ENCODE measurements at regions of chr11 and their contacts with region 1.

Region 1: GRCh38 chr11:131674051-131674755 is 303.8 kb downstream of the NTM start:
- DNase-seq: no peak
- ATAC-seq: peak; percentile 95
- H3K4me3 ChIP-seq: no peak overlapping the region
- H3K27ac ChIP-seq: no peak overlapping the region
- H3K4me1 ChIP-seq: no peaks in the 10 kb centered on the region
- H3K27me3 ChIP-seq: no peaks in the 10 kb centered on the region
- CTCF ChIP-seq: peak; percentile 96 to 97 (median 97)
- EP300 ChIP-seq: no peak
- POLR2A ChIP-seq: no peak
- RAD21 ChIP-seq: peak; percentile 91

Region 2: GRCh38 chr11:130924770-130925169 is 749.4 kb before region 1 on chr11:
- CTCF ChIA-PET with region 1: interaction called, 4 read pairs
- POLR2A ChIA-PET with region 1: no interaction called
- RAD21 ChIA-PET with region 1: no interaction called
- SMC1A ChIA-PET with region 1: no interaction called
- in situ Hi-C with region 1: loop called (anchors 10 kb)
- intact Hi-C with region 1: loop called (anchors 2 kb)
- DNase-seq: no peak
- ATAC-seq: peak; percentile 39
- H3K4me3 ChIP-seq: no peak overlapping the region
- H3K27ac ChIP-seq: no peak overlapping the region
- H3K4me1 ChIP-seq: no peaks in the 10 kb centered on the region
- H3K27me3 ChIP-seq: no peaks in the 10 kb centered on the region
- CTCF ChIP-seq: no peak
- EP300 ChIP-seq: no peak
- POLR2A ChIP-seq: no peak
- RAD21 ChIP-seq: no peak

Region 3: DNA sequence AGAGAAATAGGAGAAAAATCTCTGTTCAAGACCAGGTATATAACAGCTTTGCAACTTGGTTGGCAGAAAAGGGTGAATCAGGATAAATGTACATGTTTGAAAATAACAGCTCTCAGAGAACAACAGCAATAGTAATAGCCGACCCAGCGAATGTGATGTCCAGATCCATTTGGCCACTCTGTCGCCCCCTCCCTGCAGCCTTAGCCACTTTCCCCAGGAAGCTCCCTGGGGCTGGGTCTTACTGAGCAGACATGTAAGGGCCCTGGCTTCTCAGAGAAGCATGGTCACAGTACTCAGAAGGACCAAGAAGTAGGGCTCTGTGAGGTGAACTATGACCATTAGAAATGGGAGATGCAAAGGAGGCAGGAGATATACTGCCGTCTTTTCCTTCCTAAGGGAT is 603.8 kb before region 1 on chr11:
- CTCF ChIA-PET with region 1: interaction called, 25 read pairs
- POLR2A ChIA-PET with region 1: no interaction called
- RAD21 ChIA-PET with region 1: interaction called, 19 read pairs
- SMC1A ChIA-PET with region 1: interaction called, 6 read pairs
- in situ Hi-C with region 1: loop called (anchors 5 kb)
- intact Hi-C with region 1: no loop called
- DNase-seq: no peak
- ATAC-seq: no peak
- H3K4me3 ChIP-seq: no peak overlapping the region
- H3K27ac ChIP-seq: no peak overlapping the region
- H3K4me1 ChIP-seq: no peaks in the 10 kb centered on the region
- H3K27me3 ChIP-seq: peaks cover 1 to 2% of the 10 kb centered on the region in 2 experiments; a peak in 2 of 4 replicates
- CTCF ChIP-seq: no peak
- EP300 ChIP-seq: no peak
- POLR2A ChIP-seq: no peak
- RAD21 ChIP-seq: no peak

Region 4: DNA sequence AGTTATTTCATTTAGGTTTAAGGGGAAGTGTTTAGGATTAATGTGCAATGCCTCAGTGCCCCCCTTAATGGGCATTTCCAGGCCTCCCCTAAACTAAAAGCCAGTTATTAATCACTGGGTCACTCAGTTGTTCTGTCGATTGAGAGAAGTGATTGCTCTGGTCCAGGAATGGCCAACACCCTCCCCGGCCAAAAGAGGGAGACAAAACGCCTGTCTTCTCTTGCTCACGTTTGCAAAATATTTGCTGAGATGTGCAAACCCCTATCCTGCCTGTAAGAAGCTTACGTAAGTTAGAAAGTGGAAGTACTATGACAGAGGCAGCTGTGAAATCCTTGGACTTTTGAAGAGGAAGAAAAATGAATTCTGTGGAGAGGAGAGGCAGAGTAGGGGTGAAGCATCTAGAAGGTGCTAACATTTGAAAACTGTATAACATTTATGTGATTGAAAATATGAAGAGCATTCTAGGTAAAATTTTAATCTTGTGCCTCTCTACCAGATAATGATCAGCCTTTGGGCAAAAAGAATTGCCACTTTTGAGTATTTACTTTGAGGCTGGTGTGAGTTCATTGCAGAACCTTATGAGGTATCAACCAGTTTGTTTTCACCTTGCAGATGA is 266.1 kb before region 1 on chr11:
- CTCF ChIA-PET with region 1: interaction called, 3 read pairs
- POLR2A ChIA-PET with region 1: no interaction called
- RAD21 ChIA-PET with region 1: no interaction called
- SMC1A ChIA-PET with region 1: no interaction called
- in situ Hi-C with region 1: no loop called
- intact Hi-C with region 1: loop called (anchors 1 kb)
- DNase-seq: no peak
- ATAC-seq: peak; percentile 74
- H3K4me3 ChIP-seq: no peak overlapping the region
- H3K27ac ChIP-seq: no peak overlapping the region
- H3K4me1 ChIP-seq: no peaks in the 10 kb centered on the region
- H3K27me3 ChIP-seq: no peaks in the 10 kb centered on the region; a peak in 1 of 4 replicates
- CTCF ChIP-seq: peak; percentile 50 to 62 (median 54); a peak in 4 of 6 replicates
- EP300 ChIP-seq: no peak
- POLR2A ChIP-seq: no peak
- RAD21 ChIP-seq: 0 out of 2 replicates have a peak, but pooled peaks have one; percentile 26

Region 5: GRCh38 chr11:131584785-131585592 is 89.2 kb before region 1 on chr11:
- CTCF ChIA-PET with region 1: interaction called, 46 read pairs
- POLR2A ChIA-PET with region 1: no interaction called
- RAD21 ChIA-PET with region 1: interaction called, 12 read pairs
- SMC1A ChIA-PET with region 1: interaction called, 8 read pairs
- in situ Hi-C with region 1: loop called (anchors 5 kb)
- intact Hi-C with region 1: no loop called
- DNase-seq: no peak
- ATAC-seq: peak; percentile 69
- H3K4me3 ChIP-seq: no peak overlapping the region
- H3K27ac ChIP-seq: no peak overlapping the region
- H3K4me1 ChIP-seq: no peaks in the 10 kb centered on the region
- H3K27me3 ChIP-seq: peaks cover 2 to 4% of the 10 kb centered on the region in 2 experiments; a peak in 2 of 4 replicates
- CTCF ChIP-seq: peak; percentile 30 to 35 (median 32); a peak in 3 of 6 replicates
- EP300 ChIP-seq: no peak
- POLR2A ChIP-seq: no peak
- RAD21 ChIP-seq: 0 out of 2 replicates have a peak, but pooled peaks have one; percentile 26

Measured in GM12878 (cell line).